ENCODE measurements at regions of chr20 and their contacts with region 1.

Region 1: DNA sequence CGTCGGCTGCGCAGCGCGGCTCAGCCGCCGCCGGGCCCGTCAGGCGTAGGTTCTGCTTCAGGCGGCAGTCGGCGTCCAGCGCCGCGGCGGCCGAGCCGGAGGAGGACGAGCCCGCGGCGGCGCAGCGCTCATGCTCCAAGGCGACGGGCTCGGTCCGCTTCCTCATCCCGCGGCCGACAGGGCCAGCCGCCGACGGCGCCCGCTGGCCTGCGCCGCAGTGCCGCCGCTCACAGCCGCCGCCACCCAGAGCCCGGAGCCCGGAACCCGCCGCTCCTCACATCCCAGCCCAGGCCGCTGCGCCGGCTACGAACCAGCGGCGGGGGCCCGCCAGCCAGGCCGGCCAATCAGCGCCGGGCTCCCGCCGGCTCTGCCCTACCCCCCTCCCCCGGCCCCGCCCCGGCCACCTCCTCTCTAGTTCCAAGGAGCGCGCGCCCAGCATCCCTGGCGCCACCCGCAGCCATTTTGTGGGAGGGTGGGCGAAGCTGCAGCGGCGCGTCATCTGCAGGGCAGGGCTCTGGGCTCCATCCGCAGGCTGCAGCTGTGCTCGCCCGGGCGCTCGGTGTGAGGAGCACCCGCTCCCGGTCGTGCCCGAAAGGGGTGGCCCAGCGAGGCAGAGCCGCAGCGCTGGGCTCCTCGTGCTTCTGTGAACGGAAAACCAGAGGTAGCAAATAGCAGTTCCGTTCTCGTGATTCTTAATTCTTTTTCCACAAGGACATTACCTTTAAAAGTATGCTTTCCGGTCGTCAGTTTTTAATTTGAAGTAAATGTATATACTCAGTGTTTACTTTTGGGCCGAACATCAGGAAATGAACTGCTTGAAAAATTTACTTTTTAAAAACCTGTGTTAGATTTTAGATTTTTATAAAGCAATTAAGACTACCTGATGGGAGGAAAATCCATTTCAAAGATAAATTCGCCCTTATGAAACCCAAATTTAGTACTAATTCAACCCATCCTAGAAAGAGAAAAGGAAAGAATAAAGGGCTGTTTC is at the start of gene ABHD12:
- DNase-seq: peak; percentile 87
- H3K4me3 ChIP-seq: peak within 1 kb of the TSS; percentile 90
- CTCF ChIP-seq: no peak

Region 2: GRCh38 chr20:25000268-25000821 is 390.5 kb before region 1 on chr20:
- in situ Hi-C with region 1: loop called (anchors 10 kb)
- DNase-seq: peak; percentile 40
- H3K4me3 ChIP-seq: no peak overlapping the region
- CTCF ChIP-seq: no peak

Region 3: GRCh38 chr20:25508078-25508770 is 117.4 kb after region 1 on chr20:
- in situ Hi-C with region 1: no loop called
- DNase-seq: peak; percentile 59
- H3K4me3 ChIP-seq: no peak overlapping the region
- CTCF ChIP-seq: no peak

Measured in astrocyte of the cerebellum (primary cell).